CD4-positive, alpha-beta T cell (primary cell): ENCODE measurements at regions of chr12 and their contacts with region 1.

Region 1: GRCh38 chr12:69738351-69739286 is at the start of gene RAB3IP:
- DNase-seq: peak; percentile 84 to 98 (median 92)
- ATAC-seq: peak; percentile 84
- H3K4me3 ChIP-seq: peak within 1 kb of the TSS; percentile 82
- H3K4me3 Mint-ChIP-seq: peak within 1 kb of the TSS; percentile 86
- H3K27ac ChIP-seq: peak within 1 kb of the TSS; percentile 48 to 68
- H3K27ac Mint-ChIP-seq: peak within 1 kb of the TSS; percentile 80
- H3K4me1 ChIP-seq: peaks cover 11% of the 10 kb centered on the region
- H3K4me1 Mint-ChIP-seq: peaks cover 27% of the 10 kb centered on the region
- H3K27me3 ChIP-seq: no peaks in the 10 kb centered on the region
- H3K27me3 Mint-ChIP-seq: peaks cover 6% of the 10 kb centered on the region
- CTCF ChIP-seq: peak; percentile 75
- total RNA-seq, gene RAB3IP: 15.2 to 19.6 TPM

Region 2: GRCh38 chr12:68932961-68933893 is 805.4 kb before region 1 on chr12 and contains the start of gene CPM:
- CTCF ChIA-PET with region 1: no interaction called
- POLR2A ChIA-PET with region 1: interaction called, 3 read pairs
- intact Hi-C with region 1: loop called in 1 of 2 experiments (anchors 5 kb)
- DNase-seq: peak; percentile 40 to 88 (median 64)
- ATAC-seq: peak; percentile 95
- H3K4me3 ChIP-seq: peak within 1 kb of the TSS; percentile 84
- H3K4me3 Mint-ChIP-seq: peak within 1 kb of the TSS; percentile 79
- H3K27ac ChIP-seq: no peak within 1 kb of the TSS
- H3K27ac Mint-ChIP-seq: no peak within 1 kb of the TSS
- H3K4me1 ChIP-seq: peaks cover 8% of the 10 kb centered on the region
- H3K4me1 Mint-ChIP-seq: peaks cover 10% of the 10 kb centered on the region
- H3K27me3 ChIP-seq: peaks cover 7 to 10% of the 10 kb centered on the region in 2 experiments
- H3K27me3 Mint-ChIP-seq: peaks cover 18% of the 10 kb centered on the region
- CTCF ChIP-seq: no peak
- total RNA-seq, gene CPM: 1.9 to 2.2 TPM

Region 3: DNA sequence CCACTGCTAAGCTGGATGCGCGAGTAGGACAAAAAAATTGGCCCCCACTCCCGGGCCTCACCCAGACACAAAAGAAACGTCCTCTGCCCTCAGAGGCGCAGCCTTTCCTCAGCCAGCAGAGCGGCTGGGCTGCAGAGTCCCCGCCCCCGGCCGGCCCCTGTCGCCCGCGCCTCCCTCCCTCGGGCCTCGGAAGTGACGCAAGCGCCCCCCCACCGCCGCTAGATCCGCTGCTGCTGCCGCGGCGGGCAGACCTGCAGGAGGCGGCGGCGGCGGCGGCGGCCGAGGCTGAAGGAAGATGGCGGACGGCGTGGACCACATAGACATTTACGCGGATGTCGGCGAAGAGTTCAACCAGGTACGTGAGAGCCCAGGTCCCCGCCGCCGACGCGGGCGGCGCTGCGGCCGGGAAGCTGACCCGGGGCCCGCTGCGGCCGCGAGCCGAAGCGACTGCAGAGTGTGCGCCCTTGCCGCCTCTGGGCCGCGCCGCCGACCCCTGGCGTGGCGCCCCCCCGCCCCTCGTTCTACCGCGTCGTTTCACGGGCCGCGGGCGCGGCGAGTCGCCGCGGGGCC is 499.2 kb before region 1 on chr12 and contains the start of gene CPSF6:
- CTCF ChIA-PET with region 1: no interaction called
- POLR2A ChIA-PET with region 1: interaction called, 4 read pairs
- intact Hi-C with region 1: loop called in 1 of 2 experiments (anchors 5 kb)
- DNase-seq: peak; percentile 93 to 99 (median 96)
- ATAC-seq: peak; percentile 85
- H3K4me3 ChIP-seq: peak within 1 kb of the TSS; percentile 87
- H3K4me3 Mint-ChIP-seq: peak within 1 kb of the TSS; percentile 97
- H3K27ac ChIP-seq: peak within 1 kb of the TSS; percentile 85 to 86
- H3K27ac Mint-ChIP-seq: peak within 1 kb of the TSS; percentile 99
- H3K4me1 ChIP-seq: peaks cover 30% of the 10 kb centered on the region
- H3K4me1 Mint-ChIP-seq: peaks cover 59% of the 10 kb centered on the region
- H3K27me3 ChIP-seq: no peaks in the 10 kb centered on the region
- H3K27me3 Mint-ChIP-seq: no peaks in the 10 kb centered on the region
- CTCF ChIP-seq: no peak
- total RNA-seq, gene CPSF6: 80.9 to 86.7 TPM

Region 4: DNA sequence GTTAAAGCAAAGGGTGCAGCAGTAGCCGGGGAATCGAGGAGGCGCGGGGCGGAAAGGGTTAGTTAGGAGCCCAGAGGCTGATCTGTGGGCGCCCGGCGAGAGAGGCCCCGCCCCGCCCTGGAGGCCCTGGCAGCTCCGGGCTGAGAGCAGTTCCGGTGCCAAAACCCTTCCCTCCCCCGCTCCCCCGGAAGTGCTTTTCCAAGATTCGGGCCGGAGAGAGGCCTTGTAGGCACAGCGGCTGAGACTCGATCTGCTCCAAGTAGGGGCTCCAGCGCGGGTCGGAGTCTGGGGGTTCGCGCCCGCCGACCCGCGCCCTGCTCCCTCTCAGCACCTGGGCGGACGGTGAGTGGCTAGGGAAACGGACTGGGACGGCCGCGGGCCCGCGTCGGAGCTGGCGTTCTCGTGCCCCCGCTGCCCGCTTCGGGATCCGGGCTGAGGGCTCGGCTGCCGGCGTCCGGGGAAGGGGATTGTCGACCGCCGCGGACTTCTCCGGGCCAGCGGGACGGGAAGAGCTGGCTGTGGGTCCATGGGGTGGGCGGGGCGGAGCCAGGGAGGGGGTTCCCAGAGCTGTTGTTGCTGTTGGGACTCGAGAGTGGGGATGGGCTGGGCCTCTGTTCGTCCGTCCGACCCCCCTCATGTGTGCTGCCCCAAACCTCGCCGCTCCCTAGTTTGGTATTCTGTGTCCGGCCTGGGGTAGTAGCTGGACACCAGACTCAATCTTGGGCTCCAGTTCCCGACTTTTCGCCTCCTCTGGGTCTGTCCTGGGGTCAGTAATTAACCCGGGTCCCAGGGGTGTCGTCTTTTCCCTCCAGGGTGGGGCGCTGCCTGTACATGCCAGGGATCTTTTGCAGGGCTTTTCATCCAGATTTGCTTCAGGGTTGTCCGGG is 268.2 kb before region 1 on chr12 and contains the start of gene FRS2:
- CTCF ChIA-PET with region 1: no interaction called
- POLR2A ChIA-PET with region 1: no interaction called
- intact Hi-C with region 1: loop called in 1 of 2 experiments (anchors 5 kb)
- DNase-seq: peak; percentile 68 to 90 (median 82)
- ATAC-seq: peak; percentile 98
- H3K4me3 ChIP-seq: peak within 1 kb of the TSS; percentile 77
- H3K4me3 Mint-ChIP-seq: peak within 1 kb of the TSS; percentile 100
- H3K27ac ChIP-seq: peak within 1 kb of the TSS; percentile 63 to 72
- H3K27ac Mint-ChIP-seq: peak within 1 kb of the TSS; percentile 92
- H3K4me1 ChIP-seq: peaks cover 12% of the 10 kb centered on the region
- H3K4me1 Mint-ChIP-seq: peaks cover 55% of the 10 kb centered on the region
- H3K27me3 ChIP-seq: no peaks in the 10 kb centered on the region
- H3K27me3 Mint-ChIP-seq: no peaks in the 10 kb centered on the region
- CTCF ChIP-seq: no peak
- total RNA-seq, gene FRS2: 21.7 to 24.9 TPM

Region 5: DNA sequence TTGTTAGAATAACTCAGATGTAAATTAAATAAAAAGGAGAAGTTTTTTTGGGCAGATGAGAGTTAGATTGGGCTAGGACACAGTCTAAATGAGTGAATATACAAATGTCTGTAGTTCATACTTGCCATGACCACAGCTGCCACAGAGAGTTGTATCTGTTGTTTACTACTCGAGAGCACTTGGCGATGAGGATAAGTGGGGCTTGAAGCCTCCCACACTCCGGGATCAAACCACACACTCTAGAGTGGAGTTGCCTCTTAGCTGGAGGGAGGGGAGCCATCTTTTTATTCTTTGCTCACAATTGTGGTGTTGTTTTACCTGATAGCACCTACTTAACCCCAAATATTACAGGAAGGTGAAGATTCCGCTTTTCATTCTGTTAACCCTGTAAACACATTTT is 67.0 kb before region 1 on chr12:
- CTCF ChIA-PET with region 1: no interaction called
- POLR2A ChIA-PET with region 1: no interaction called
- intact Hi-C with region 1: no loop called
- DNase-seq: no peak
- ATAC-seq: no peak
- H3K4me3 ChIP-seq: no peak overlapping the region
- H3K4me3 Mint-ChIP-seq: no peak overlapping the region
- H3K27ac ChIP-seq: no peak overlapping the region
- H3K27ac Mint-ChIP-seq: no peak overlapping the region
- H3K4me1 ChIP-seq: no peaks in the 10 kb centered on the region
- H3K4me1 Mint-ChIP-seq: no peaks in the 10 kb centered on the region
- H3K27me3 ChIP-seq: no peaks in the 10 kb centered on the region
- H3K27me3 Mint-ChIP-seq: no peaks in the 10 kb centered on the region
- CTCF ChIP-seq: no peak

Region 6: GRCh38 chr12:69688496-69689427 is 49.9 kb before region 1 on chr12:
- CTCF ChIA-PET with region 1: no interaction called
- POLR2A ChIA-PET with region 1: no interaction called
- intact Hi-C with region 1: no loop called
- DNase-seq: peak in 10 of 14 experiments; percentile 1 to 46 (median 7)
- ATAC-seq: no peak
- H3K4me3 ChIP-seq: no peak overlapping the region
- H3K4me3 Mint-ChIP-seq: no peak overlapping the region
- H3K27ac ChIP-seq: no peak overlapping the region
- H3K27ac Mint-ChIP-seq: no peak overlapping the region
- H3K4me1 ChIP-seq: no peaks in the 10 kb centered on the region
- H3K4me1 Mint-ChIP-seq: no peaks in the 10 kb centered on the region
- H3K27me3 ChIP-seq: no peaks in the 10 kb centered on the region
- H3K27me3 Mint-ChIP-seq: peaks cover 10% of the 10 kb centered on the region
- CTCF ChIP-seq: no peak